Activated CD4-positive, alpha-beta T cell treated with anti-CD3 and anti-CD28 coated beads for 36 hours (primary cell): ENCODE measurements at regions of chr18 and their contacts with region 1.

Region 1: GRCh38 chr18:38670486-38670885 is 1104.9 kb upstream of the CELF4 start:
- DNase-seq: no peak
- ATAC-seq: no peak
- H3K4me3 Mint-ChIP-seq: no peak overlapping the region
- H3K27ac Mint-ChIP-seq: no peak overlapping the region
- H3K4me1 Mint-ChIP-seq: no peaks in the 10 kb centered on the region
- H3K27me3 Mint-ChIP-seq: no peaks in the 10 kb centered on the region

Region 2: GRCh38 chr18:38330573-38330972 is 339.9 kb before region 1 on chr18:
- CTCF ChIA-PET with region 1: no interaction called
- POLR2A ChIA-PET with region 1: no interaction called
- intact Hi-C with region 1: no loop called
- DNase-seq: peak; percentile 11
- ATAC-seq: peak; percentile 58
- H3K4me3 Mint-ChIP-seq: no peak overlapping the region
- H3K27ac Mint-ChIP-seq: no peak overlapping the region
- H3K4me1 Mint-ChIP-seq: no peaks in the 10 kb centered on the region
- H3K27me3 Mint-ChIP-seq: no peaks in the 10 kb centered on the region

Region 3: GRCh38 chr18:38654946-38655345 is 15.5 kb before region 1 on chr18:
- CTCF ChIA-PET with region 1: no interaction called
- POLR2A ChIA-PET with region 1: interaction called, 10 read pairs
- intact Hi-C with region 1: no loop called
- DNase-seq: no peak
- ATAC-seq: no peak
- H3K4me3 Mint-ChIP-seq: no peak overlapping the region
- H3K27ac Mint-ChIP-seq: no peak overlapping the region
- H3K4me1 Mint-ChIP-seq: no peaks in the 10 kb centered on the region
- H3K27me3 Mint-ChIP-seq: no peaks in the 10 kb centered on the region

Region 4: DNA sequence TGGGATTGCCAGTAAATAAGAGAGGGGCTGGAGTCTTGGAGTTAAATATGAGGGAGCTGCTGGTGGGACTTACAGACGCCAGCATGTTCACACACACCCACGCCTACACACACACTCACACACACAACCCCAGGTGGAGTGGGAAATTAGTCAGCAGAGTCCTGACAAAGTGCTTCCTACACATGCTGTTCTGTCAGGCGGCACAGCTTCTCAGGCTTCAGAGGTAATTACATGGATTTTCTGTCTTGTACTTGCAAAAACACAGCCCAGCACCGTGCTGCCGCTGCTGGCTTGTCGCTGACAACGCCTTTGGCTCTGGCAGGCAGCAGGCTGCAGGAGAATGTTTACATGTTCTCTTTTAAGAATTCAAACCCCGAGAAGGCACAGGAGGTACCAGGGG is 81.4 kb after region 1 on chr18:
- CTCF ChIA-PET with region 1: no interaction called
- POLR2A ChIA-PET with region 1: no interaction called
- intact Hi-C with region 1: no loop called
- DNase-seq: peak; percentile 35
- ATAC-seq: peak; percentile 23
- H3K4me3 Mint-ChIP-seq: no peak overlapping the region
- H3K27ac Mint-ChIP-seq: no peak overlapping the region
- H3K4me1 Mint-ChIP-seq: peaks cover 16% of the 10 kb centered on the region
- H3K27me3 Mint-ChIP-seq: no peaks in the 10 kb centered on the region